ENCODE measurements at regions of chr7 and their contacts with region 1.

Region 1: GRCh38 chr7:80699721-80700256 is 61.3 kb downstream of the CD36 start:
- DNase-seq: no peak
- ATAC-seq: no peak
- H3K4me3 ChIP-seq: no peak overlapping the region
- H3K4me3 Mint-ChIP-seq: no peak overlapping the region
- H3K27ac ChIP-seq: no peak overlapping the region
- H3K27ac Mint-ChIP-seq: no peak overlapping the region
- H3K4me1 ChIP-seq: no peaks in the 10 kb centered on the region
- H3K4me1 Mint-ChIP-seq: no peaks in the 10 kb centered on the region
- H3K27me3 ChIP-seq: no peaks in the 10 kb centered on the region
- H3K27me3 Mint-ChIP-seq: no peaks in the 10 kb centered on the region
- CTCF ChIP-seq: no peak

Region 2: DNA sequence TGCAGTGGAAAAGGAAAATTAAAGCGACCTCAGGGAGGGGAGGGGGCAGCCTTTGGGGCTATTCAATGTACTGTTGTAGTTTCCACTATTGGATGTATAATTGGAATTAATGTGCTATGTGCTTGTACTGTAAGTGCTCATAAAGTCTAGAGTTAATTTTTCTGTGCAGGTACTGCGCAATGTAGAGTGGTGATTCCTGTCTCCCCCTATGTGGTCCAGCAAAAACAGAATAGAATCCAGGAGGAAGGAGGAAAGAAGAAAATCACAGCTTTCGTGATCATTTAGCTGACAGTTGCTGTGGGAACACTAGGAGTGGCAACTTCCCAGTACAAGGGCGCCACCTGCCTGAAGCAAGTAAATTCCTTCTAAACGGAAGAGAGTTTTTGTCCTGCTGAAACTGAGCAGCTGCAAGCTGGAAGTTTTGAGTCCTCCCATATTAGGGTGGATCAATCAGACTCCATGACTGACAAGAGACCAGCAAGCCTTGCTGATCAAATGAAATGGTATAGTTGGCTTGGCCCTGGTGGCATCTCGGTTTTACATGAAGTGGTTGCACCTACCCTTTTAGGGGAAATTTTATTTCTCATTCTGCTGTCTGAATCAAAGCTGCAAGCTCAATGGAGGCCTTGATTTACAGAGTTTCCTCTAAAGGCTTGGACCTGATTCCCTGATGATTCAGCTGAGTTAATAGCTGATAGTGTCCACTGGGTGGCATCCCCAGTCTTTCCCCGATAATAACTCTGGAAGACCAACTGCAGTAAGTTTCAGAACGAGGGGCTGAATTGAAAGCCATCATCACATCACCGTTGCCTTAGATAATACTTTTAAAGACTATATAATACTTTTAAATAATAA is 770.3 kb after region 1 on chr7:
- CTCF ChIA-PET with region 1: no interaction called
- POLR2A ChIA-PET with region 1: no interaction called
- intact Hi-C with region 1: loop called in 1 of 2 experiments (anchors 5 kb)
- DNase-seq: peak in 2 of 9 experiments; percentile 12 to 18
- ATAC-seq: no peak
- H3K4me3 ChIP-seq: no peak overlapping the region
- H3K4me3 Mint-ChIP-seq: no peak overlapping the region
- H3K27ac ChIP-seq: no peak overlapping the region
- H3K27ac Mint-ChIP-seq: no peak overlapping the region
- H3K4me1 ChIP-seq: no peaks in the 10 kb centered on the region
- H3K4me1 Mint-ChIP-seq: no peaks in the 10 kb centered on the region
- H3K27me3 ChIP-seq: no peaks in the 10 kb centered on the region
- H3K27me3 Mint-ChIP-seq: no peaks in the 10 kb centered on the region
- CTCF ChIP-seq: no peak